Activated CD4-positive, alpha-beta T cell treated with anti-CD3 and anti-CD28 coated beads for 36 hours (primary cell): ENCODE measurements at regions of chr1 and their contacts with region 1.

Region 1: GRCh38 chr1:44792783-44793714 is 5.1 kb upstream of the BEST4 start:
- DNase-seq: peak; percentile 4
- ATAC-seq: no peak
- H3K4me3 Mint-ChIP-seq: no peak overlapping the region
- H3K27ac Mint-ChIP-seq: no peak overlapping the region
- H3K4me1 Mint-ChIP-seq: no peaks in the 10 kb centered on the region
- H3K27me3 Mint-ChIP-seq: no peaks in the 10 kb centered on the region

Region 2: DNA sequence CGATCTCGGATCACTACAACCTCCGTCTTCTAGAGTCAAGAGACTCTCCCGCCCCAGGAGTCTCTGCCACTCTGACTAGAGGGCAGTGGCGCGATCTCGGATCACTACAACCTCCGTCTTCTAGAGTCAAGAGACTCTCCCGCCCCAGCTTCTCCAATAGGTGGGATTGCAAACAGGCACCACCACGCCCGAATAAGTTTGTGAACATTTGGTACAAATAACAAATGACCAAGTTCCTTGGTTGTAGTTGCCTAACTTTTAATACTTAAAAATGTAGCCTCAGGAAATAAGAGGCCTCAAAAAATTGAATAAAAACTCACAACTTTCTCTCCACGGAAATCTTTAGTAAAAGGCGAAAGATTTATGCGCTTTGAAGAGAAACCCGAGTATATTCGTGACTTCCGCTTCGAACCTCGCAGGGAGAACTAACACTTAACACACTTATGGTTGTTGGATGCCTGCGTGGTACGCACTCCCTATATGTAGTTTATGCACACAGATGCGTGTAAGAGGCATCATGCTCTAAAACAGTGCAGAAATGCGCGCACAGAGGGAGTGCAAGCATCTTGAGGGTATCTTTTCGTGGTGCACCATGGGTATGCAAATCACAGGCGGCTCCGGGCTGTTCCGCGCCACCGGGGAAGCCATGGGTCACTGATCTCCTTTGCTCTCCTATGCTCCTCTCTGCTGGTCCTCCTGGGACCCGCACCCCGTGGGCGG is 26.7 kb after region 1 on chr1:
- CTCF ChIA-PET with region 1: interaction called, 7 read pairs
- POLR2A ChIA-PET with region 1: interaction called, 186 read pairs
- intact Hi-C with region 1: no loop called
- DNase-seq: peak; percentile 88
- ATAC-seq: peak; percentile 88
- H3K4me3 Mint-ChIP-seq: peak overlapping the region; percentile 85
- H3K27ac Mint-ChIP-seq: peak overlapping the region; percentile 100
- H3K4me1 Mint-ChIP-seq: peaks cover 37% of the 10 kb centered on the region
- H3K27me3 Mint-ChIP-seq: no peaks in the 10 kb centered on the region